AG04450 (cell line): ENCODE measurements at regions of chr20 and their contacts with region 1.

Region 1: GRCh38 chr20:740141-740540 is 28.2 kb downstream of the SLC52A3 start:
- DNase-seq: no peak
- H3K4me3 ChIP-seq: no peak overlapping the region
- H3K27ac ChIP-seq: no peak overlapping the region
- H3K27me3 ChIP-seq: no peaks in the 10 kb centered on the region
- CTCF ChIP-seq: no peak

Region 2: DNA sequence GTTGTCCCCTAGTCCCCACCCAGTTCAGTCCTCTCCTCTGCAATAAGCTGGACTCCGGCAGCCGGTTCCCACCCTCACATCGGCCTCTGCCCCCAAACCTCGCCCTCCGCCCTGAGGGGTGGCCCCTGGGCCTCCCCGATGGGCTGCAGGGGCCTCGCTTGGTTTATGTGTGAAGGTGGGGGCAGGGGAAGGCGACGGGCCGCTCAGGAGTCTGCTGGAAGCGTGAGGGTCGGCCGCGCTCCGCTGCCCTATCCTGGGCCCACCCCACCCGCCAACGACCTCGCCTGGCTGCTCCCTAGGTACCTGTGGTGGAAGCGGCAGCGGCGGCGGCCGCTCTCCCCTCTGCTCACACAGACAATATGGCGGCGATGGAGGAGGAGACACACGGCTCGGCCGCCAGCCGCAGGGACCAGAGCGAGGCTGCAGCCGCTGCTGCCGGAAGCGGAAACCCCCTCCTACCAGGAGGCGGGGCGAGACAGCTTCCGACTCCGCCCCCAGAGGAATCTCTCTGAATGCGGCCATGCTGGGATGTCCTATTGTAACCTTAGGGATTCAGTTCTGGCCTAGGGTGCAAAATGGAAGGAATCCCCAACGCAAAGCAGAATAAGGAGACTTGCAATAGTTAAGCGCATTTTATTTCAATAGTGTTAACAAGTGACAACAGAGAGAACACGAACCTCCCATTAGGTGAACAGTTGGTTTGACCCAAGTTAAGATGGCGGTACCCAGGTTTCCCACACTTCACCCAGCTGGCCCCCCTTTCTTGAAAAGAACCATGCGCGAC is 196.6 kb before region 1 on chr20 and contains the start of gene CSNK2A1:
- CTCF ChIA-PET with region 1: interaction called, 10 read pairs
- POLR2A ChIA-PET with region 1: no interaction called
- DNase-seq: peak; percentile 85
- H3K4me3 ChIP-seq: peak within 1 kb of the TSS; percentile 85
- H3K27ac ChIP-seq: peak within 1 kb of the TSS; percentile 74
- H3K27me3 ChIP-seq: peaks cover 5% of the 10 kb centered on the region
- CTCF ChIP-seq: no peak
- polyA plus RNA-seq, gene CSNK2A1: 110 and 136 TPM in 2 replicates

Region 3: DNA sequence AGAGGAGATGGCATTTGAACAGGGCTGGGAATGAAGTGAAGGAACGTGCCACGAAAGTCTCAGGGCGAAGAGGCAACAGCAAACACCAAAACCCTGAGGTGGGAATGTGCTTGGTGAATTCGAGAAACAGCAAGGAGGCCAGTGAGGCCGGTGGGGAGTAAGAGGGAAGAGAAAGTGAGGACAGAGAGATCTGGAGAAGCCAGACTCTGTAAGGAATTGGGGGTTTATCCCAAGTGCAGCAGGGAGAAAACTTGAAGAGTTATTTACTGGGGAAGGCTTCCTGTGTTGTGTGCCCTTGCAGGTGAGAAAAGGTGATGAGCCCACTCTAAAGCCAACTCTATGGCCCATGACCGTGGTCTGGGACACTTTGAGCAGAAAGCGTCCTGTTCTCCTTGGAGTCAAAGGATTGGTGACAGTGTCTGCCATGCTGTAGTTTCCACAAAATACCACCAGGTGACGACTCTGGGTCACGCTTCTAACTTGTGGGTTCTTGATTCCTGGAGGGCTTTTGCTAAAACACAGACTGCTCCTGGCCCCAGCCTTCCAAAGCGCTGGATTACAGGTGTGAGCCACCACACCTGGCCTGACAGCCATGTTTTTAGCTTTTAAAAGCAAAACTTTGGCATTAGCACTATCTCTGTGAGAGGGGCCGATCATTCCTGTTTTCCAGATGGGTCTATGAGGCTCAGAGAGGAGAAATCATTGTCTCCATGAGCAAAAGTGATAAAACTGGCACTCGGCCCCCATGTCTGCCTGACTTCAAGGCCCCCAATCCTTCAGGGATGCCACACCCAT is 178.5 kb before region 1 on chr20:
- CTCF ChIA-PET with region 1: interaction called, 82 read pairs
- POLR2A ChIA-PET with region 1: no interaction called
- DNase-seq: peak; percentile 16
- H3K4me3 ChIP-seq: no peak overlapping the region
- H3K27ac ChIP-seq: no peak overlapping the region
- H3K27me3 ChIP-seq: peaks cover 16% of the 10 kb centered on the region
- CTCF ChIP-seq: peak; percentile 100

Region 4: GRCh38 chr20:709423-709822 is 30.7 kb before region 1 on chr20:
- CTCF ChIA-PET with region 1: no interaction called
- POLR2A ChIA-PET with region 1: no interaction called
- DNase-seq: no peak
- H3K4me3 ChIP-seq: no peak overlapping the region
- H3K27ac ChIP-seq: no peak overlapping the region
- H3K27me3 ChIP-seq: peaks cover 16% of the 10 kb centered on the region
- CTCF ChIP-seq: no peak

Region 5: GRCh38 chr20:728248-728944 is 11.7 kb before region 1 on chr20:
- CTCF ChIA-PET with region 1: interaction called, 13 read pairs
- POLR2A ChIA-PET with region 1: no interaction called
- DNase-seq: no peak
- H3K4me3 ChIP-seq: peak overlapping the region; percentile 40; the same call in 1 of the 2 replicates
- H3K27ac ChIP-seq: no peak overlapping the region
- H3K27me3 ChIP-seq: peaks cover 35% of the 10 kb centered on the region
- CTCF ChIP-seq: peak; percentile 62

Region 6: GRCh38 chr20:750801-751200 is 10.7 kb after region 1 on chr20:
- CTCF ChIA-PET with region 1: interaction called, 11 read pairs
- POLR2A ChIA-PET with region 1: no interaction called
- DNase-seq: no peak
- H3K4me3 ChIP-seq: no peak overlapping the region
- H3K27ac ChIP-seq: no peak overlapping the region
- H3K27me3 ChIP-seq: no peaks in the 10 kb centered on the region
- CTCF ChIP-seq: no peak

Region 7: DNA sequence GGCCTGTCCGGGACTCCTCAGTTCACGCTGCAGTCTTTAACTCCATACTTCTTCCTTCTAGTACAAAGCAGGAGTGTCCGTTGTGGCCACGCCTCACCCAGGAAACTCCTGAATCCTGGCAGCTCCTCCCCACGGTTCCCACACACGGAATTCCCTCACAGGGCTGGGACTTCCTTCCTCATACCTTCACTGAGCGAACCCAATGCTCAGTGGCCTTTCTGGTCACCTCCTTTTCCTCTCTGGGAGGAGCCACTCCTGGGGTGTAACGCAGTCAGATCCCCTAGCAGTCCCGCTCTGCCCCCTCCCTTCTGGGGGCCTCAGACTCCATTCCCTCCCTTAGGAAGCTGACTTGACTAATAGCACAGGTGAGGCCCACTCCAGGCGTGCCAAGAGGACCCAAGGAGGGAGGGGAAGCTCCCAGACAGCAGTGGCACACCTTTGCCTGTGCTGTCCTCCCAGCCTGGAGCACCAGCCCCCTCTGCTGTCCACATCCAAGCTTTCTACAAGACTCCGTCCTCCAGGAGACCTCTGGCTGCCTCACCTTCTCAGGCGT is 28.4 kb after region 1 on chr20 and contains the start of gene SLC52A3:
- CTCF ChIA-PET with region 1: no interaction called
- POLR2A ChIA-PET with region 1: no interaction called
- DNase-seq: no peak
- H3K4me3 ChIP-seq: no peak within 1 kb of the TSS
- H3K27ac ChIP-seq: no peak within 1 kb of the TSS
- H3K27me3 ChIP-seq: peaks cover 4% of the 10 kb centered on the region
- CTCF ChIP-seq: no peak
- polyA plus RNA-seq, gene SLC52A3: not detected in 2 replicates

Region 8: DNA sequence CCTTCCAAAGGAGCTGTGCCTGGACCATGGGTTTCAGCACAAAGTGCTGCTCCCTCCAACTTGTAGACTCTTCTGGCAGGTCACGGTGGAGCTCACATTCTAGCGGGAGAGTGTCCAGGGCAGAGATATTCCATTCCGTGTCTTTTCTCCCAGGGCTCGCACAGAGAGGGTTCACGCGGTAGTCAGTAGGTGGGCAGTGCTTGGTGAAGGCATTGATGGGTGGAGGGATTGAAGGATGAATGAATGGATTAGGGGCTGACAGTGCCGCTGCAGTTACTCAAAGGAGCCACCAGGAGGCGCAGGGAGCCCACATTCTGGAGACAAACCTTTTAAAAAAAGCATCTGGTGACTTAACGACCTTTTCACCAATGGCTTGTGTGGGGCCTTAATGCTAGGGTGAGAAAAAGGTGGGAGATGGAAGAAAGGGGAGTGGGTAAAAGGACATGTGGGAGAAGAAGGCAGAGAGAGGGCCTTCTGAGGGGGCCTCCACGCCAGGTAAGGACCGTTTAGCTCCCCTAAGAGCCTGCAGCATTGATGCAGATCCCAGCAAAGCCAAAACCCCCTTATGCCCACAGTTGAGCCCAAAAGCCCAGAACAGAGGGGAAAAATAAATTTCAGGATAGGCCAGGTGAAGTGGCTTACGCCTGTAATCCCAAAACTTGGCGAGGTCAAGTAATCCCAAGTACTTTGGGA is 75.9 kb after region 1 on chr20:
- CTCF ChIA-PET with region 1: interaction called, 10 read pairs
- POLR2A ChIA-PET with region 1: no interaction called
- DNase-seq: no peak
- H3K4me3 ChIP-seq: no peak overlapping the region
- H3K27ac ChIP-seq: no peak overlapping the region
- H3K27me3 ChIP-seq: peaks cover 2% of the 10 kb centered on the region
- CTCF ChIP-seq: peak; percentile 98